CD8-positive, alpha-beta T cell (primary cell): ENCODE measurements at regions of chr16 and their contacts with region 1.

Region 1: DNA sequence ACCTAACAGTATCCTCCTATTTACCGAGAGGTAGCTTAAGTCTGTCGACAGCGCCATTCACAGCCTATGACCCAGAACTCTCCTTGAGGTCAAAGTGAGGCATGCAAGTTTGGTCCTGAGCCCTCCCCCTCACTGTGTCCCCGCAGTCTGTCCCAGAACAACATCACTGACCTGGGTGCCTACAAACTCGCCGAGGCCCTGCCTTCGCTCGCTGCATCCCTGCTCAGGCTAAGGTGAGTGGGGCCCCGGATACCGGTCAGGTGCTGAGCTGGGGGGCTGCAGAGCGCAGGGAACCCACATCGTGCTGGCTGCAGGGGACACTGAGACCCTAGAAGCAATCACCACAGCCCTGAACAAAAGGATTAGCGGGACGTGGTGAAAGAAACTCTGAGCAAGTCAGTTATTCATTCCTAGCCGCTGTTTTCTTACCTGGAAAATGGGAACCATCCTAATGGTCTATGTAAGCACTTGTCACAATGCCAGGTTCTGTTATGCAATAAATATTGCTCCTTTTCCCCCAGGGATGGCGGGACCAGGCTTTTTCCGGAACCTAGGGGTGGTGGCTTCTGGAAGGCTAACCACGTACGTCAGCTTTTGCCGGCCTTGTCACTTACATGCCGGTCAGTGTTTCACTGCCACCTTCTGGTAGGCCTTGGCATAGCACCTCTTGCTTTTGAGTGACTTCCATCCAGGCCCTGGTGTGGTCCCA is 23.8 kb downstream of the DEXI start:
- DNase-seq: peak; percentile 62 to 85 (median 79)
- ATAC-seq: peak; percentile 75
- H3K4me3 ChIP-seq: no peak overlapping the region
- H3K4me3 Mint-ChIP-seq: no peak overlapping the region
- H3K27ac ChIP-seq: no peak overlapping the region
- H3K27ac Mint-ChIP-seq: no peak overlapping the region
- H3K4me1 ChIP-seq: no peaks in the 10 kb centered on the region
- H3K4me1 Mint-ChIP-seq: peaks cover 3% of the 10 kb centered on the region
- H3K27me3 ChIP-seq: no peaks in the 10 kb centered on the region
- H3K27me3 Mint-ChIP-seq: no peaks in the 10 kb centered on the region
- CTCF ChIP-seq: peak; percentile 91

Region 2: DNA sequence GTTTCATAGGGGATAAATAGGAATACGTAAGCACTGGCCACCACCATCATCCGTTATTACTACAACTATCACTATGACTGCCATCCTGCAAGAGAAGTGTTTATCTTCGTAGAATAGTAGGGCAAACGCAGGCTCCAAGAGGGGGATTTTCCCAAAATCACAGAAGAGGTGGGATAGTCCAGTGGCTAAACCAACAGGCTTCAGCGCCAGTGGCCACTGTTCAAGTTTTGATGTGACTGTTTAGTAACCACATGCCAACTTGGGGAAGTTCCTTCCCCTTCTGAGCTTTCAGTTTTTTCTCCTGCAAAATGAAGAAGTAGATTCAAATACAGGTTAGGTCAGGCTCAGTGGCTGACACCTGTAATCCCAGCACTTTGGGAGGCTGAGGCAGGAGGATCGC is 675.5 kb before region 1 on chr16:
- CTCF ChIA-PET with region 1: no interaction called
- POLR2A ChIA-PET with region 1: no interaction called
- intact Hi-C with region 1: no loop called
- DNase-seq: no peak
- ATAC-seq: no peak
- H3K4me3 ChIP-seq: no peak overlapping the region
- H3K4me3 Mint-ChIP-seq: no peak overlapping the region
- H3K27ac ChIP-seq: no peak overlapping the region
- H3K27ac Mint-ChIP-seq: no peak overlapping the region
- H3K4me1 ChIP-seq: no peaks in the 10 kb centered on the region
- H3K4me1 Mint-ChIP-seq: no peaks in the 10 kb centered on the region
- H3K27me3 ChIP-seq: no peaks in the 10 kb centered on the region
- H3K27me3 Mint-ChIP-seq: peaks cover 11% of the 10 kb centered on the region
- CTCF ChIP-seq: no peak

Region 3: GRCh38 chr16:10314811-10315210 is 603.6 kb before region 1 on chr16:
- CTCF ChIA-PET with region 1: no interaction called
- POLR2A ChIA-PET with region 1: no interaction called
- intact Hi-C with region 1: loop called in 1 of 2 experiments (anchors 5 kb)
- DNase-seq: peak in 2 of 9 experiments; percentile 47 to 61
- ATAC-seq: peak; percentile 46
- H3K4me3 ChIP-seq: no peak overlapping the region
- H3K4me3 Mint-ChIP-seq: no peak overlapping the region
- H3K27ac ChIP-seq: no peak overlapping the region
- H3K27ac Mint-ChIP-seq: no peak overlapping the region
- H3K4me1 ChIP-seq: peaks cover 5% of the 10 kb centered on the region
- H3K4me1 Mint-ChIP-seq: peaks cover 22% of the 10 kb centered on the region
- H3K27me3 ChIP-seq: no peaks in the 10 kb centered on the region
- H3K27me3 Mint-ChIP-seq: no peaks in the 10 kb centered on the region
- CTCF ChIP-seq: peak; percentile 68

Region 4: GRCh38 chr16:10521681-10522274 is 396.7 kb before region 1 on chr16:
- CTCF ChIA-PET with region 1: interaction called, 16 read pairs
- POLR2A ChIA-PET with region 1: no interaction called
- intact Hi-C with region 1: no loop called
- DNase-seq: peak in 7 of 9 experiments; percentile 7 to 68 (median 44)
- ATAC-seq: peak; percentile 46
- H3K4me3 ChIP-seq: no peak overlapping the region
- H3K4me3 Mint-ChIP-seq: no peak overlapping the region
- H3K27ac ChIP-seq: no peak overlapping the region
- H3K27ac Mint-ChIP-seq: no peak overlapping the region
- H3K4me1 ChIP-seq: no peaks in the 10 kb centered on the region
- H3K4me1 Mint-ChIP-seq: peaks cover 2% of the 10 kb centered on the region
- H3K27me3 ChIP-seq: peaks cover 0 to 3% of the 10 kb centered on the region in 2 experiments
- H3K27me3 Mint-ChIP-seq: peaks cover 11% of the 10 kb centered on the region
- CTCF ChIP-seq: peak; percentile 63

Region 5: GRCh38 chr16:10765772-10766171 is 152.7 kb before region 1 on chr16:
- CTCF ChIA-PET with region 1: no interaction called
- POLR2A ChIA-PET with region 1: no interaction called
- intact Hi-C with region 1: loop called in 1 of 2 experiments (anchors 10 kb)
- DNase-seq: peak in 5 of 9 experiments; percentile 20 to 86 (median 61)
- ATAC-seq: peak; percentile 87
- H3K4me3 ChIP-seq: no peak overlapping the region
- H3K4me3 Mint-ChIP-seq: peak overlapping the region; percentile 39
- H3K27ac ChIP-seq: peak overlapping the region in 1 of 2 experiments; percentile 52
- H3K27ac Mint-ChIP-seq: peak overlapping the region; percentile 86
- H3K4me1 ChIP-seq: peaks cover 21% of the 10 kb centered on the region
- H3K4me1 Mint-ChIP-seq: peaks cover 23% of the 10 kb centered on the region
- H3K27me3 ChIP-seq: no peaks in the 10 kb centered on the region
- H3K27me3 Mint-ChIP-seq: no peaks in the 10 kb centered on the region
- CTCF ChIP-seq: no peak

Region 6: GRCh38 chr16:10937068-10937859 is 18.8 kb after region 1 on chr16:
- CTCF ChIA-PET with region 1: interaction called, 20 read pairs
- POLR2A ChIA-PET with region 1: no interaction called
- intact Hi-C with region 1: no loop called
- DNase-seq: peak in 2 of 9 experiments; percentile 34 to 35
- ATAC-seq: no peak
- H3K4me3 ChIP-seq: peak overlapping the region; percentile 12 to 14
- H3K4me3 Mint-ChIP-seq: peak overlapping the region; percentile 93
- H3K27ac ChIP-seq: no peak overlapping the region
- H3K27ac Mint-ChIP-seq: peak overlapping the region; percentile 60
- H3K4me1 ChIP-seq: peaks cover 69% of the 10 kb centered on the region
- H3K4me1 Mint-ChIP-seq: peaks cover 82% of the 10 kb centered on the region
- H3K27me3 ChIP-seq: no peaks in the 10 kb centered on the region
- H3K27me3 Mint-ChIP-seq: no peaks in the 10 kb centered on the region
- CTCF ChIP-seq: no peak

Region 7: DNA sequence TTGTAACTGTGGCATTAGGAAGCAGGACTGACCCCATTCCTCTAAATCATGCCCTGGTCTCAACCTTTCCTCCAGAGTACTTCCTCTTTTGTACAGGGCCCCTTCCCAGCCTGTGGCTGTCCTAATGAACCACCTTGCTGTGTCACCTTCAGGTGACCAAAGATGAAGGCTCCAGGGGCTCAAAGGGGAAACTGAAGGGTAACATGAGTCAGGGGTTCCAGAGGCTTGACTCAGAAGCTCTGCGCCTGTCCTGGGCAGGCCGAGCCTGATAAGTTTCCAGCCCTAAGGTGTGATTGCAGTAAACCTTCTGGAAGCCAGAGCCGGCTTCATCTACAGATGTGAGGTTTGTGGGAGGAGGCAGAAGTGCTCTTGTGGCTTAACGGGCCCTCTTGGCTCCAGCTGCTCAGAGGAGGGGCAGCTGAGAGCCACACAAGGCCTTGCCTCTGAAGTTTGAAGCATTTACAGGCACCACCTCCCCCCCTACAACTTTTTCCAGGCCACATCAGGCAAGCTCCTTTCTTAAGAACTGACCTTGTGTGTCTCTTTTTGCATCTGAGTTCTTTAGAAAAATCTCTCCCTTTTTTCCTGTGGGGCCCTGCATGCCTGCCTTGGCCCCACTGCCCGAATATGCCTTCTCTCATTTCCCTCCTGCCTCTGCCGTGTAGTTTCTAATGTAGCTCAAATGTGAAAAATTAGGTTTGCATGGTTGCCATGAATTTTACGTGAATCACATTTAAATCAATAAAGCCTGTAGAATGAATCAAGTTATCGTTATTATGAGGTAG is 175.8 kb after region 1 on chr16:
- CTCF ChIA-PET with region 1: no interaction called
- POLR2A ChIA-PET with region 1: no interaction called
- intact Hi-C with region 1: no loop called
- DNase-seq: peak in 2 of 9 experiments; percentile 15 to 28
- ATAC-seq: peak; percentile 44
- H3K4me3 ChIP-seq: no peak overlapping the region
- H3K4me3 Mint-ChIP-seq: peak overlapping the region; percentile 17
- H3K27ac ChIP-seq: no peak overlapping the region
- H3K27ac Mint-ChIP-seq: peak overlapping the region; percentile 83
- H3K4me1 ChIP-seq: peaks cover 30% of the 10 kb centered on the region
- H3K4me1 Mint-ChIP-seq: peaks cover 31% of the 10 kb centered on the region
- H3K27me3 ChIP-seq: no peaks in the 10 kb centered on the region
- H3K27me3 Mint-ChIP-seq: no peaks in the 10 kb centered on the region
- CTCF ChIP-seq: no peak